Naive thymus-derived CD4-positive, alpha-beta T cell (primary cell): ENCODE measurements at regions of chr1 and their contacts with region 1.

Region 1: DNA sequence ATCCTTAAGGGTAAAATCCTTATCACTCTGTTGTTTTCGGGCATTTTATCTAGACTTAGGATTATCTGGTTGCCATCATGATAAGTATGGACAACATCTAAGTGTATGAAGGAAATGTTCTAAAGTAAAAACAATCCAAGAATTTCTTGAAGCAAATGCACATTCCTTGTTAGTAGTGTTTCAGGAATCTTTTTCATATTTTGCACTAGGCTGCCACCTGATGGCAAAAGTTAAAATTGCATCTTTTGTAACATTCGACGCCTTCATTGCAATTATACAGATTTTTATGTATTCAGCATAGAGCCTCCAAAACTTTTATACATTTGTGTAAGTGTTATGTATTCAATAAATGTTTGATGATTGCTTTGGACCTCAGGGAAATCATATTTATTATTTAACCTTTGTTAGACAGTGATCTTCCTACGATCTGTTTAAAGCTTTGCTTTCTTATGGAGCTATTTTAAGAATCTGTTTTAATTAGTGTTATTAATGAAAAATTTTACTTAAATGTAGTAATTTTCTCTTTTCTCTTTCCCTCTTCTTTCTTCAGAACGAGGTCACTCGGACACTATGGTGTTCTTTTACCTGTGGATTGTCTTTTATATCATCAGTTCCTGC is 49.4 kb upstream of the KIAA1614 start:
- DNase-seq: peak in 6 of 9 donors; percentile 8 to 51 (median 36)
- ATAC-seq: peak; percentile 36
- H3K4me3 ChIP-seq: no peak overlapping the region
- H3K4me3 Mint-ChIP-seq: no peak overlapping the region
- H3K27ac ChIP-seq: no peak overlapping the region
- H3K27ac Mint-ChIP-seq: no peak overlapping the region
- H3K4me1 ChIP-seq: no peaks in the 10 kb centered on the region
- H3K4me1 Mint-ChIP-seq: no peaks in the 10 kb centered on the region
- H3K27me3 ChIP-seq: no peaks in the 10 kb centered on the region
- H3K27me3 Mint-ChIP-seq: no peaks in the 10 kb centered on the region

Region 2: GRCh38 chr1:180515864-180516388 is 347.3 kb before region 1 on chr1:
- CTCF ChIA-PET with region 1: interaction called, 138 read pairs
- POLR2A ChIA-PET with region 1: interaction called, 5 read pairs
- intact Hi-C with region 1: loop called (anchors 1 kb)
- DNase-seq: peak in 8 of 9 donors; percentile 33 to 65 (median 53)
- ATAC-seq: peak; percentile 94
- H3K4me3 ChIP-seq: no peak overlapping the region
- H3K4me3 Mint-ChIP-seq: no peak overlapping the region
- H3K27ac ChIP-seq: no peak overlapping the region
- H3K27ac Mint-ChIP-seq: no peak overlapping the region
- H3K4me1 ChIP-seq: no peaks in the 10 kb centered on the region
- H3K4me1 Mint-ChIP-seq: peaks cover 0 to 3% (median 0%) of the 10 kb centered on the region in 7 donors
- H3K27me3 ChIP-seq: no peaks in the 10 kb centered on the region
- H3K27me3 Mint-ChIP-seq: peaks cover 0 to 13% (median 10%) of the 10 kb centered on the region in 5 donors

Region 3: DNA sequence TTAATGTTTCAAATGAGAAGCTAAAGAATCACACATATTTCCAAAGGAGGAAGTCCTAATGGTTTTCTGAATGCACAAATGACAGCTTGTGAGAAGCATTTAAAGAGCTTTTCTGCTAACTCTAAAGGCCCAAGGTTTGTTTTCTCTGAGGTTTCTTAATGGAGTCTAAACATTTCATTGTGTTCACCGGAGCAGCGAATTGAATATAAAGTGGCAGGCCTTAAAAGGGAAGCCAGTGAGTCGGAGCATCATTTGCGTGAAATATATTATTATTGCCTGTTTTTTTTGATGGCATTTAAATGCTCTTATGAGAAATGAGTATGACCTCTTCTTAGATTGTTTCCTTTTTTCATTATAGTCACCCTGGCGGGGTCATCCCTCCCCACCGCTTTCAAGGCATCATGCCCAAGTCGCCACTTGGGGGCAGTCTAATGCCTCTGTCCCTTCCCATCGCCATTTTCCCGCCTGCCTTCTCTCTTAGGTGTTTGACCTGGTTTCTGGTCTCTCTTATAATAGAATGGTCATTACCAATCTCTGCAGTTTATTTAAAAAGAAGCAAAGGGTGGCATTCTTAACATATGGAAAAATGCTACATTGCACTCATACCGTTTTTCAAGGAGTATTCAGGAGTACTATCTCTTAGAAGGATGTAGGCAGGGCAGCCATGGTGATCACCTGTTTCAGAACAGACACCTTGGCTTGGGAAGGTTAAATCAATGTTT is 329.8 kb before region 1 on chr1:
- CTCF ChIA-PET with region 1: interaction called, 40 read pairs
- POLR2A ChIA-PET with region 1: no interaction called
- intact Hi-C with region 1: loop called (anchors 1 kb)
- DNase-seq: peak; percentile 21 to 65 (median 40)
- ATAC-seq: peak; percentile 81
- H3K4me3 ChIP-seq: no peak overlapping the region
- H3K4me3 Mint-ChIP-seq: no peak overlapping the region
- H3K27ac ChIP-seq: no peak overlapping the region
- H3K27ac Mint-ChIP-seq: no peak overlapping the region
- H3K4me1 ChIP-seq: no peaks in the 10 kb centered on the region
- H3K4me1 Mint-ChIP-seq: peaks cover 0 to 6% (median 0%) of the 10 kb centered on the region in 7 donors
- H3K27me3 ChIP-seq: peaks cover 0 to 4% of the 10 kb centered on the region in 2 donors
- H3K27me3 Mint-ChIP-seq: peaks cover 0 to 34% (median 0%) of the 10 kb centered on the region in 5 donors

Region 4: GRCh38 chr1:180778782-180779398 is 84.4 kb before region 1 on chr1:
- CTCF ChIA-PET with region 1: no interaction called
- POLR2A ChIA-PET with region 1: no interaction called
- intact Hi-C with region 1: loop called in 1 of 2 experiments (anchors 5 kb)
- DNase-seq: no peak
- ATAC-seq: no peak
- H3K4me3 ChIP-seq: no peak overlapping the region
- H3K4me3 Mint-ChIP-seq: no peak overlapping the region
- H3K27ac ChIP-seq: no peak overlapping the region
- H3K27ac Mint-ChIP-seq: no peak overlapping the region
- H3K4me1 ChIP-seq: no peaks in the 10 kb centered on the region
- H3K4me1 Mint-ChIP-seq: peaks cover 4 to 30% (median 13%) of the 10 kb centered on the region in 7 donors
- H3K27me3 ChIP-seq: no peaks in the 10 kb centered on the region
- H3K27me3 Mint-ChIP-seq: no peaks in the 10 kb centered on the region

Region 5: DNA sequence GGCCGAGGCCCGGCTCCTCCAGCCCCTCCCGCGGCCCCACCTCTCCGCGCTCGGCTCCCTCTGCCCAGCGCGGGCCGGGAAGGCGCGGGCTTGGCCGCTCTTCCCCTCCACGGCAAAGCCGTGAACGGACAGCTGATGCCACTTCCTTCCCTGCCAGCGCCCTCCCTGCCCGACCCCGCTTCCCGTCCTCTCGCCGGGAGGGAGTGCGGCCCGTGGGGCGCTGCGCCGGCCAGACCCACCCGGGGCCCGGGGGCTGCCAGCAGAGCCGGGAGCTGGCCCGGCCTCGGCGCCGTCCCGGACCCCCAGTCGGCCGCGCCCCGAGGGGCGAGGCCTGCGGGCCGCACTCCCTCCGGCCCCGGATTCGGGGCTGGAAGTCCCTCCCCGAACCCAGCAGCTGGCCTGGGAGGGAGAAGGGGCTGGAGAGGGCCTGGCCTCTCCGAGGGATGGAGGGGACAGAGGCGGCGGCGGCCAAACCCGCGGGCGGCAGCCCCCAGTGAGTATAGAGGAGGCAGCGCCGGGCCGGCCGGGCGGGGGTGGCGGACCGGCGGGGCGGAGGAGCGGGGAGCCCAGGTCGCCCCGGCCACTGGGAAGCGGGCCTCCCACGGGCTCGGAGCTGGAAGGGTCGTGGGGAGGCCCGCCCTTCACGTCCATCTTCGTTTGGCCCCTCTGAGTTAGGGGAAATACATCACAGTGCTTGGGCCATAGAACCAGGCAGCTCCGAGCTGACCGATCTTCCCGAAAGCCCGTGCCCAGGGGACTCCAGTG is 49.7 kb after region 1 on chr1 and contains the start of gene KIAA1614:
- CTCF ChIA-PET with region 1: no interaction called
- POLR2A ChIA-PET with region 1: no interaction called
- intact Hi-C with region 1: no loop called
- DNase-seq: no peak
- ATAC-seq: peak; percentile 44
- H3K4me3 ChIP-seq: no peak within 1 kb of the TSS
- H3K4me3 Mint-ChIP-seq: peak within 1 kb of the TSS in 9 of 10 donors; percentile 23 to 70 (median 44)
- H3K27ac ChIP-seq: no peak within 1 kb of the TSS
- H3K27ac Mint-ChIP-seq: no peak within 1 kb of the TSS
- H3K4me1 ChIP-seq: no peaks in the 10 kb centered on the region
- H3K4me1 Mint-ChIP-seq: peaks cover 0 to 21% (median 8%) of the 10 kb centered on the region in 7 donors
- H3K27me3 ChIP-seq: no peaks in the 10 kb centered on the region
- H3K27me3 Mint-ChIP-seq: peaks cover 43 to 57% (median 45%) of the 10 kb centered on the region in 5 donors
- total RNA-seq, gene KIAA1614: 0.13 to 0.31 (median 0.20) TPM in 4 of 5 experiments, not detected in the other